Body of pancreas (tissue), 4 donors: ENCODE measurements at regions of chr16 and their contacts with region 1.

Region 1: DNA sequence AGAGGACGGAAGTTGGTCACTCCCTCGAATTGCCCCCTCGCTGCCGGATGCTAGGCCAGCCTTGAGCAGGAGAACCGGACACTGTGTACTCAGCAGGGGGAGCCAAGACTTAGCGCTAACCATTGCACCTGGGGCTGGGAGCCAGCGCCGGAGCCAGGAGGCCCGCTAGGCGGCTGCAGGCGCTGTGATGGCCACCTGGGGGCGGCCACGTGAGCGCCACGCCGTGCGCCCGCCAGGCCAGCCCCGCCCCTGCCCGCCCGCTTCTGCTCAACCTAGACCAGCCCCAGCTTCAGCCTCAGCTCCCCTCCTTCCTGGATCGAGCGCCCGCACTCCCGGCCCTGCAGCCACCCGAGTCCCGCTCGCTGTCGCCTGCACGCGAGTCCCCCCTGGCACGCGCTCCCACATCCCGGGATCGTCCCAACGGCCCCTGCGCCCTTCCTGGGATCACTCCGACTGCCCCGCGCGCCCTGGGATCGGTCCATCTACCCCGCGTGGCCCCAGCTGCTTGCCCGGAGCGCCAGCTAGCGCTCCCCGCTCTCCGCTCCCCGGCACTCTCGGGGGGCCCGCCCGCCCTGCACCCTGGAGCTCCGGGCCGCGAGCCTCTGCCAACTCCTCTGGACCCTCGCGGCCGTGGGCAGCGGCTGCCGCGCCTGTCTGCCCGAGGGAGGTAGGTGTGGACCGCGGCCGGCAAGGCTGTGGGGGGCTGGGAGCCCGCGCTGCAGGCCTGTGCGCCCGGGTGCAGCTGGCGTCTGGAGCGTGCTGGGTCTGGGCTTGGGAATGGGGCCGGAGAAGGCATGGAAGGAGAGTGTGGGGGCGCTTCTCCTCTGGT is at the start of gene EEF2K:
- DNase-seq: peak; percentile 95 to 97 (median 97)
- ATAC-seq: peak; percentile 93
- H3K4me3 ChIP-seq: peak within 1 kb of the TSS; percentile 97 to 99
- H3K27ac ChIP-seq: peak within 1 kb of the TSS; percentile 82 to 93 (median 88)
- H3K4me1 ChIP-seq: peaks cover 32% of the 10 kb centered on the region
- H3K27me3 ChIP-seq: no peaks in the 10 kb centered on the region
- CTCF ChIP-seq: peak; percentile 70 to 99 (median 91)
- POLR2A ChIP-seq: peak; percentile 76 to 79 (median 77)
- total RNA-seq, gene EEF2K: 23.6 to 25.1 TPM

Region 2: GRCh38 chr16:22300427-22301071 is 94.3 kb after region 1 on chr16:
- intact Hi-C with region 1: loop called (anchors 10 kb)
- DNase-seq: peak; percentile 69 to 80 (median 78)
- ATAC-seq: no peak
- H3K4me3 ChIP-seq: no peak overlapping the region
- H3K27ac ChIP-seq: no peak overlapping the region
- H3K4me1 ChIP-seq: peaks cover 34% of the 10 kb centered on the region
- H3K27me3 ChIP-seq: no peaks in the 10 kb centered on the region
- CTCF ChIP-seq: peak; percentile 26 to 60 (median 53)
- POLR2A ChIP-seq: no peak